H1 (cell line): ENCODE measurements at regions of chr6 and their contacts with region 1.

Region 1: DNA sequence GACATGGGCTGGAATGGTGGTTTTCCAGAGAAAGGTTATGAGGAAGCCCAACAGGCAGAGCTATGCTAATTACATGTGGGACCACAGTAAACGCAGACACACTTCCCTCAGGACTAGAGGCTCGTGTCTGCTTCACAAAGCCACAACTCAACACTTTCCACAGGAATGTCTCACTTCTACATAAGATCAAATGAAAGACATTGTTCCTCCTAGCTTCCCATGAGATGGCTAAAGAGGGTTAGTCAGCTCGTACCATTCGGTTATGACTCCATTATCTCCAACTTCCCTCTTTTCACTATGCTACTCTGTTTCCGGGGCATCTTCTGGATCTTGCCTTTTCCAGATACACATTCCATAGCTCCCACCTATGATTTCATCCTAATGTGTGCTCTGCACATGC is 29.1 kb upstream of the ZC3H12D start:
- DNase-seq: no peak
- H3K4me3 ChIP-seq: no peak overlapping the region
- H3K27ac ChIP-seq: no peak overlapping the region
- H3K4me1 ChIP-seq: no peaks in the 10 kb centered on the region
- H3K27me3 ChIP-seq: no peaks in the 10 kb centered on the region
- CTCF ChIP-seq: no peak
- EP300 ChIP-seq: no peak
- POLR2A ChIP-seq: no peak
- RAD21 ChIP-seq: no peak

Region 2: DNA sequence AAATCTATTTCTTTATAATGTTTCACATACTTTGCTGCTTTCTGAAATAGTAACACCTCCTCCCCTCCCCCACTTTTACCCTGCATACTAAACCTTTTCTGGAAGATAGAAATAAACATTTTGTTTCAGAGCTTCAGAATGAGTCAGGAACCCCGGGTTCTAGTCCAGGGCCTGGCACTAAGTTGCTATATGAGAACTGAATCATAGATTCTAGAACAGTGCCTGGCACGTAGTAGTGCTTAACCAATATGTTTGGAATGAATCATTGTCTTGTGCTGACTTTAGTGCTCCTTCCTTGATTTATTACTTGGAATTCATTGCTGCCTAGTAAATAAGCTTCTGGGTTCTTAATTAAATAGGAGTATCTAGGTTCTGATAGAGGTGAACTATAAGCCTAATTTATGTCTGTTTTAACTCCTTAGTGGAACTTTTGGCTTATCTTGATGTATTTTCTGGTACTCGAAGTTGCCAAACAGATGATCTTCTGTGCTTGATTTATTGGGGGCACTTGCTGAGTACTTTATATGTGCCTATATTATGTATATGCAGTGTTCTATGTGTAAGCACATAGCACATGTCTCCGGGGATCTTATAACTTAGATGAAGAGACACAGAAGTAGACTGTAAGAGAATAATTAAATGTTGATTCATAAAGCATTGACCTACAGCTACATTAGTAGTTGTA is 177.8 kb before region 1 on chr6:
- CTCF ChIA-PET with region 1: no interaction called
- POLR2A ChIA-PET with region 1: no interaction called
- DNase-seq: no peak
- H3K4me3 ChIP-seq: no peak overlapping the region
- H3K27ac ChIP-seq: peak overlapping the region; percentile 54; the same call in 1 of the 2 replicates
- H3K4me1 ChIP-seq: peaks cover 0 to 13% (median 7%) of the 10 kb centered on the region in 4 experiments; a peak in 4 of 7 replicates
- H3K27me3 ChIP-seq: no peaks in the 10 kb centered on the region
- CTCF ChIP-seq: no peak
- EP300 ChIP-seq: no peak
- POLR2A ChIP-seq: no peak
- RAD21 ChIP-seq: no peak

Region 3: DNA sequence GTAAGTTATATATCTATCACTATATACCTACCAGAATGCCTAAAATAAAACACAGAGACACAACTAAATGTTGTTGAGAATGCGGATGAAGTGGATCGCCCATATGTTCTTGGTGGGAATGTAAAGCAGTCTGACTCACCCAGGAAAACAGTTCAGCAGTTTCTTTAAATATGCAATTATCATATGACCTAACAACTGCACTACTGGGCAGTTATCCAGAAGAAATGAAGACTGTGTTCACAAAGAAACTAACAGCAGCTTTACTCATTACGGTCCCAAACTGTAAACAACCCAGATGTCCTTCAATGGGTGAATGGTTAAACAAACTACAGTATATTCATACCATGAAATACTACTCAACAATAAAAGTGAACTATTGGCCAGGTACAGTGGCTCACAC is 14.8 kb before region 1 on chr6:
- CTCF ChIA-PET with region 1: interaction called, 11 read pairs
- POLR2A ChIA-PET with region 1: no interaction called
- DNase-seq: no peak
- H3K4me3 ChIP-seq: no peak overlapping the region
- H3K27ac ChIP-seq: no peak overlapping the region
- H3K4me1 ChIP-seq: no peaks in the 10 kb centered on the region
- H3K27me3 ChIP-seq: no peaks in the 10 kb centered on the region
- CTCF ChIP-seq: no peak
- EP300 ChIP-seq: no peak
- POLR2A ChIP-seq: no peak
- RAD21 ChIP-seq: no peak

Region 4: DNA sequence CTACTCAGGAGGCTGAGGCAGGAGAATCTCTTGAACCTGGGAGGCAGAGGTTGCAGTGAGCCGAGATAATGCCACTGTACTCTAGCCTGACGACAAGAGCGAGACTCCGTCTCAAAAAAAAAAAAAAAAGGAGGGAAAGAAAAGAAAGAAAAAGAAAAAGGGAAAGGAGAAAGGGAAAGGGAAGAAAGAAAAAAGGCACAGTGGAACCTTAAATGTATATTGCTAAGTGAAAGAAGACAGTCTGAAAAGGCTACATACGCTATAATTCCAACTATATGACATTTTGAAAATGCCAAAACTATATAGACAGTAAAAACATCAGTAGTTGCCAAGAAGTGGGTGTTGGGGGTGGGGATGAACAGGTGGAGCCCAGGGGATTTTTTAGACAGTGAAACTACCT is 15.7 kb after region 1 on chr6:
- CTCF ChIA-PET with region 1: interaction called, 17 read pairs
- POLR2A ChIA-PET with region 1: no interaction called
- DNase-seq: no peak
- H3K4me3 ChIP-seq: no peak overlapping the region
- H3K27ac ChIP-seq: no peak overlapping the region
- H3K4me1 ChIP-seq: no peaks in the 10 kb centered on the region
- H3K27me3 ChIP-seq: no peaks in the 10 kb centered on the region
- CTCF ChIP-seq: no peak
- EP300 ChIP-seq: no peak
- POLR2A ChIP-seq: no peak
- RAD21 ChIP-seq: no peak

Region 5: GRCh38 chr6:150293423-150294173 is 779.7 kb after region 1 on chr6:
- CTCF ChIA-PET with region 1: no interaction called
- POLR2A ChIA-PET with region 1: no interaction called
- DNase-seq: no peak
- H3K4me3 ChIP-seq: no peak overlapping the region
- H3K27ac ChIP-seq: no peak overlapping the region
- H3K4me1 ChIP-seq: no peaks in the 10 kb centered on the region
- H3K27me3 ChIP-seq: no peaks in the 10 kb centered on the region
- CTCF ChIP-seq: no peak
- EP300 ChIP-seq: no peak
- POLR2A ChIP-seq: no peak
- RAD21 ChIP-seq: no peak

Region 6: DNA sequence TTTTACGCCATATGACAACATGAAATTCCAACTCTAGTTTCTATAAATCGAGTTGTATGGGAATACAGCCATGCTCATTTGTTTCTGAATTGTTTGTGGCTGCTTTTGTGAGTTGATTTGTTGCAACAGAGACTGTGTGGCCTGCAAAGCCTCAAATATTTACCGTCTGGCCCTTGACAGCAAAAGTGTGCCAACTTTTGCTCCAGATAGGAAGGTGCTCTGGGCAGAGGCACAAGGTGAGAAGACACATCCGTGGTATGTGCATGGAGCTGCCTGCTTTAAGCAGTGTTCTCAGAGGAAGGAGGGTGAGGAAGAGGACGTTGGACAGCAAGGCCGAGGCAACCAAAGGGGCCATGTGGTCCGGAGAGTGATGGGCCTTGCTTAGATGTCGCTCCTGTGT is 912.3 kb after region 1 on chr6:
- CTCF ChIA-PET with region 1: no interaction called
- POLR2A ChIA-PET with region 1: no interaction called
- DNase-seq: no peak
- H3K4me3 ChIP-seq: no peak overlapping the region
- H3K27ac ChIP-seq: no peak overlapping the region
- H3K4me1 ChIP-seq: no peaks in the 10 kb centered on the region
- H3K27me3 ChIP-seq: no peaks in the 10 kb centered on the region
- CTCF ChIP-seq: no peak
- EP300 ChIP-seq: no peak
- POLR2A ChIP-seq: no peak
- RAD21 ChIP-seq: no peak